Naive thymus-derived CD4-positive, alpha-beta T cell (primary cell): ENCODE measurements at regions of chr13 and their contacts with region 1.

Region 1: GRCh38 chr13:98997738-98998641 is 20.1 kb upstream of the DOCK9 start:
- DNase-seq: no peak
- ATAC-seq: no peak
- H3K4me3 ChIP-seq: no peak overlapping the region
- H3K4me3 Mint-ChIP-seq: peak overlapping the region; percentile 46 to 84 (median 72)
- H3K27ac ChIP-seq: peak overlapping the region; percentile 90
- H3K27ac Mint-ChIP-seq: peak overlapping the region; percentile 44 to 99 (median 96)
- H3K4me1 ChIP-seq: peaks cover 33 to 89% of the 10 kb centered on the region in 2 donors
- H3K4me1 Mint-ChIP-seq: peaks cover 60 to 100% (median 99%) of the 10 kb centered on the region in 7 donors
- H3K27me3 ChIP-seq: no peaks in the 10 kb centered on the region
- H3K27me3 Mint-ChIP-seq: no peaks in the 10 kb centered on the region

Region 2: GRCh38 chr13:98910501-98910951 is 87.5 kb before region 1 on chr13:
- CTCF ChIA-PET with region 1: no interaction called
- POLR2A ChIA-PET with region 1: interaction called, 3 read pairs
- intact Hi-C with region 1: loop called in 1 of 2 experiments (anchors 2 kb)
- DNase-seq: peak in 8 of 9 donors; percentile 13 to 59 (median 50)
- ATAC-seq: peak; percentile 71
- H3K4me3 ChIP-seq: no peak overlapping the region
- H3K4me3 Mint-ChIP-seq: peak overlapping the region in 9 of 10 donors; percentile 5 to 82 (median 69)
- H3K27ac ChIP-seq: no peak overlapping the region
- H3K27ac Mint-ChIP-seq: peak overlapping the region; percentile 75 to 96 (median 90)
- H3K4me1 ChIP-seq: peaks cover 9 to 10% of the 10 kb centered on the region in 2 donors
- H3K4me1 Mint-ChIP-seq: peaks cover 12 to 53% (median 47%) of the 10 kb centered on the region in 7 donors
- H3K27me3 ChIP-seq: no peaks in the 10 kb centered on the region
- H3K27me3 Mint-ChIP-seq: no peaks in the 10 kb centered on the region

Region 3: GRCh38 chr13:98977568-98978265 is 20.3 kb before region 1 on chr13 and contains the start of gene DOCK9:
- CTCF ChIA-PET with region 1: interaction called, 4 read pairs
- POLR2A ChIA-PET with region 1: interaction called, 47 read pairs
- intact Hi-C with region 1: loop called in 1 of 2 experiments (anchors 2 kb)
- DNase-seq: no peak
- ATAC-seq: no peak
- H3K4me3 ChIP-seq: no peak within 1 kb of the TSS
- H3K4me3 Mint-ChIP-seq: peak within 1 kb of the TSS in 6 of 10 donors; percentile 24 to 63 (median 42)
- H3K27ac ChIP-seq: no peak within 1 kb of the TSS
- H3K27ac Mint-ChIP-seq: peak within 1 kb of the TSS in 8 of 9 donors; percentile 14 to 88 (median 66)
- H3K4me1 ChIP-seq: peaks cover 12 to 69% of the 10 kb centered on the region in 2 donors
- H3K4me1 Mint-ChIP-seq: peaks cover 36 to 96% (median 93%) of the 10 kb centered on the region in 7 donors
- H3K27me3 ChIP-seq: no peaks in the 10 kb centered on the region
- H3K27me3 Mint-ChIP-seq: no peaks in the 10 kb centered on the region
- total RNA-seq, gene DOCK9: 75.1 to 214 (median 128) TPM

Region 4: DNA sequence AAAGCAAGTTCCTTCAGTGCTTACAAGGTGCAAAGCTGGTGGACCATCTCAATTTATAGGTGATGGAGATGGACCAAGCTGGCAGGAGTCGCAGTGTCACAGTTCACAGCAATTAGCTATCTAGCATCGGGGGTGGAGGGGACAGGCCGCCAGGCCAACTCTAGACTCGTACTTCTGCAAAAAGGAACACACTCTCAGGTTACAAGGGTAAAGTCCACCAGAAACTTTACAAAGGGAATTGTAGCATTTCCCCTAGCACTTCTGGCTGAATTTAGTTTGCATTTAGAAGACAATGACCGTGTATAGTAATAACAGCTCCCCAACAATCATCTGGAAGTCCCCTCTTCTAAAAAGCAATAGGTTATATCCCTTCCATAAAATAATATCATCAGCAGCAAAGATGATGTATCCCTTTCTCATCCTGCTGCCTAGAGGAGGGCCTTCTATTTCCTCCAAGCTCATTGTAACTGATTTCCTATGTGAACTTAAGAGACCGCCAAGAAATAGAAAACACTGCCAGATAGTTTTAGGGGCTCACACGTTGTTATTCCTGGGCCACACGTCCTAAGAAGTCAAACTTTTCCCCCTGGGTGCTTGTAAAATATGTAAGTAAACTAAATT is 11.7 kb before region 1 on chr13:
- CTCF ChIA-PET with region 1: interaction called, 4 read pairs
- POLR2A ChIA-PET with region 1: interaction called, 47 read pairs
- intact Hi-C with region 1: loop called in 1 of 2 experiments (anchors 1 kb)
- DNase-seq: no peak
- ATAC-seq: no peak
- H3K4me3 ChIP-seq: no peak overlapping the region
- H3K4me3 Mint-ChIP-seq: peak overlapping the region in 2 of 10 donors; percentile 3 to 9
- H3K27ac ChIP-seq: peak overlapping the region; percentile 3
- H3K27ac Mint-ChIP-seq: peak overlapping the region in 8 of 9 donors; percentile 2 to 91 (median 75)
- H3K4me1 ChIP-seq: peaks cover 12 to 20% of the 10 kb centered on the region in 2 donors
- H3K4me1 Mint-ChIP-seq: peaks cover 29 to 93% (median 85%) of the 10 kb centered on the region in 7 donors
- H3K27me3 ChIP-seq: no peaks in the 10 kb centered on the region
- H3K27me3 Mint-ChIP-seq: no peaks in the 10 kb centered on the region

Region 5: GRCh38 chr13:99009987-99010551 is 12.1 kb after region 1 on chr13:
- CTCF ChIA-PET with region 1: no interaction called
- POLR2A ChIA-PET with region 1: interaction called, 11 read pairs
- intact Hi-C with region 1: loop called in 1 of 2 experiments (anchors 1 kb)
- DNase-seq: no peak
- ATAC-seq: no peak
- H3K4me3 ChIP-seq: no peak overlapping the region
- H3K4me3 Mint-ChIP-seq: no peak overlapping the region
- H3K27ac ChIP-seq: no peak overlapping the region
- H3K27ac Mint-ChIP-seq: peak overlapping the region in 4 of 9 donors; percentile 25 to 58 (median 40)
- H3K4me1 ChIP-seq: peaks cover 3 to 24% of the 10 kb centered on the region in 2 donors
- H3K4me1 Mint-ChIP-seq: peaks cover 26 to 81% (median 71%) of the 10 kb centered on the region in 7 donors
- H3K27me3 ChIP-seq: no peaks in the 10 kb centered on the region
- H3K27me3 Mint-ChIP-seq: peaks cover 0 to 4% (median 0%) of the 10 kb centered on the region in 5 donors

Region 6: GRCh38 chr13:99015606-99016490 is 17.9 kb after region 1 on chr13:
- CTCF ChIA-PET with region 1: no interaction called
- POLR2A ChIA-PET with region 1: interaction called, 11 read pairs
- intact Hi-C with region 1: loop called in 1 of 2 experiments (anchors 2 kb)
- DNase-seq: peak in 6 of 9 donors; percentile 44 to 64 (median 51)
- ATAC-seq: peak; percentile 78
- H3K4me3 ChIP-seq: no peak overlapping the region
- H3K4me3 Mint-ChIP-seq: peak overlapping the region in 9 of 10 donors; percentile 3 to 68 (median 59)
- H3K27ac ChIP-seq: no peak overlapping the region
- H3K27ac Mint-ChIP-seq: peak overlapping the region in 8 of 9 donors; percentile 11 to 92 (median 60)
- H3K4me1 ChIP-seq: peaks cover 13 to 27% of the 10 kb centered on the region in 2 donors
- H3K4me1 Mint-ChIP-seq: peaks cover 35 to 88% (median 78%) of the 10 kb centered on the region in 7 donors
- H3K27me3 ChIP-seq: no peaks in the 10 kb centered on the region
- H3K27me3 Mint-ChIP-seq: peaks cover 0 to 4% (median 0%) of the 10 kb centered on the region in 5 donors

Region 7: DNA sequence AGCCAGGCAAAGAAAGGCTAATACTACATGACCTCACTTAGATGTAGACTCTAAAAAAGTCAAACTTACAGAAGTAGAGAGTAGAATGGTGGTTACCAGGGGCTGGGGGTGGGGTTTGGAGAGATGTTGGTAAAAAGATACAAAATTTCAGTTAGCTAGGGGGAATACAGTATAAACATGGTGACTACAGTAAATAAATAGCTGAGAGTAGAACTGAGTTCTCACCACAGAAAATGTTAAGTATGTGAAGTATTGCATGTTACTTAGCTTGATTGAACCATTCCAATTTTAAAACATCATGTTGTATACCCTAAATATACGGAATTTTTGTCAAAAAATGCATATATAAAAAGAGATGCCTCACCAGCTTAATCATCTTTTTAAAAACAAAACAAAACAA is 47.4 kb after region 1 on chr13:
- CTCF ChIA-PET with region 1: no interaction called
- POLR2A ChIA-PET with region 1: interaction called, 8 read pairs
- intact Hi-C with region 1: loop called in 1 of 2 experiments (anchors 1 kb)
- DNase-seq: no peak
- ATAC-seq: no peak
- H3K4me3 ChIP-seq: no peak overlapping the region
- H3K4me3 Mint-ChIP-seq: peak overlapping the region; percentile 60 to 88 (median 80)
- H3K27ac ChIP-seq: peak overlapping the region; percentile 70
- H3K27ac Mint-ChIP-seq: peak overlapping the region; percentile 85 to 97 (median 94)
- H3K4me1 ChIP-seq: peaks cover 79 to 93% of the 10 kb centered on the region in 2 donors
- H3K4me1 Mint-ChIP-seq: peaks cover 64 to 100% (median 89%) of the 10 kb centered on the region in 7 donors
- H3K27me3 ChIP-seq: no peaks in the 10 kb centered on the region
- H3K27me3 Mint-ChIP-seq: peaks cover 0 to 19% (median 0%) of the 10 kb centered on the region in 5 donors